MCF 10A (cell line): ENCODE measurements at regions of chr6 and their contacts with region 1.

Region 1: GRCh38 chr6:26031595-26032339 is 55.5 kb upstream of the HFE start:
- DNase-seq: peak; percentile 99
- H3K4me3 Mint-ChIP-seq: peak overlapping the region; percentile 81
- H3K27ac Mint-ChIP-seq: peak overlapping the region; percentile 97
- H3K4me1 Mint-ChIP-seq: peaks cover 25% of the 10 kb centered on the region
- H3K27me3 Mint-ChIP-seq: no peaks in the 10 kb centered on the region
- CTCF ChIP-seq: peak; percentile 12

Region 2: GRCh38 chr6:25835442-25836283 is 196.1 kb before region 1 on chr6:
- CTCF ChIA-PET with region 1: no interaction called
- POLR2A ChIA-PET with region 1: no interaction called
- intact Hi-C with region 1: no loop called
- DNase-seq: no peak
- H3K4me3 Mint-ChIP-seq: no peak overlapping the region
- H3K27ac Mint-ChIP-seq: no peak overlapping the region
- H3K4me1 Mint-ChIP-seq: no peaks in the 10 kb centered on the region
- H3K27me3 Mint-ChIP-seq: peaks cover 34% of the 10 kb centered on the region
- CTCF ChIP-seq: no peak

Region 3: DNA sequence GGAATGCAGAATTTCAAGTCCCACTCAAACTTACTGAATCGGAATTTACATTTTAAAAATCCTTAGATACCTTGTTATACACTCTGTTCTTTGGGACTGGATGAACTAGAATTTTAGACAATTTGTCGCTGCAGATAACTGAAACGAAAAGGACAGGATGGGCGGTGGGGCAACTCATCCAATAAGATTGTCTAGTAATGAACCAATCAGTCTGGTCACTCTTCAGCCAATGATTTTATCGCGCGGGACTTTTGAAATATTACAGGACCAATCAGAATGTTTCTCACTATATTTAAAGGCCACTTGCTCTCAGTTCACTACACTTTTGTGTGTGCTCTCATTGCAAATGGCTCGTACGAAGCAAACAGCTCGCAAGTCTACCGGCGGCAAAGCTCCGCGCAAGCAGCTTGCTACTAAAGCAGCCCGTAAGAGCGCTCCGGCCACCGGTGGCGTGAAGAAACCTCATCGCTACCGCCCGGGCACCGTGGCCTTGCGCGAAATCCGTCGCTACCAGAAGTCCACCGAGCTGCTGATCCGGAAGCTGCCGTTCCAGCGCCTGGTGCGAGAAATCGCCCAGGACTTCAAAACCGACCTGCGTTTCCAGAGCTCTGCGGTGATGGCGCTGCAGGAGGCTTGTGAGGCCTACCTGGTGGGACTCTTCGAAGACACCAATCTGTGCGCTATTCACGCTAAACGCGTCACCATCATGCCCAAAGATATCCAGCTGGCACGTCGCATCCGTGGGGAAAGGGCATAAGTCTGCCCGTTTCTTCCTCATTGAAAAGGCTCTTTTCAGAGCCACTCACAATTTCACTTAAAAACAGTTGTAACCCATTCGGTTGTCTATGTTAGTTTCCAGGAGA is 13.5 kb after region 1 on chr6:
- CTCF ChIA-PET with region 1: interaction called, 70 read pairs
- POLR2A ChIA-PET with region 1: interaction called, 1,354 read pairs
- intact Hi-C with region 1: loop called (anchors 1 kb)
- DNase-seq: peak; percentile 95
- H3K4me3 Mint-ChIP-seq: peak overlapping the region; percentile 80
- H3K27ac Mint-ChIP-seq: peak overlapping the region; percentile 86
- H3K4me1 Mint-ChIP-seq: peaks cover 16% of the 10 kb centered on the region
- H3K27me3 Mint-ChIP-seq: no peaks in the 10 kb centered on the region
- CTCF ChIP-seq: no peak

Region 4: GRCh38 chr6:26087284-26088115 is 55.7 kb after region 1 on chr6 and contains the start of gene HFE:
- CTCF ChIA-PET with region 1: interaction called, 5 read pairs
- POLR2A ChIA-PET with region 1: interaction called, 20 read pairs
- intact Hi-C with region 1: no loop called
- DNase-seq: peak; percentile 53
- H3K4me3 Mint-ChIP-seq: peak within 1 kb of the TSS; percentile 88
- H3K27ac Mint-ChIP-seq: peak within 1 kb of the TSS; percentile 92
- H3K4me1 Mint-ChIP-seq: peaks cover 10% of the 10 kb centered on the region
- H3K27me3 Mint-ChIP-seq: no peaks in the 10 kb centered on the region
- CTCF ChIP-seq: no peak
- total RNA-seq, gene HFE: 2.8 and 5.2 TPM in 2 replicates

Region 5: GRCh38 chr6:26183581-26184366 is 152.0 kb after region 1 on chr6:
- CTCF ChIA-PET with region 1: no interaction called
- POLR2A ChIA-PET with region 1: interaction called, 24 read pairs
- intact Hi-C with region 1: no loop called
- DNase-seq: peak; percentile 56
- H3K4me3 Mint-ChIP-seq: peak overlapping the region; percentile 79
- H3K27ac Mint-ChIP-seq: peak overlapping the region; percentile 84
- H3K4me1 Mint-ChIP-seq: peaks cover 27% of the 10 kb centered on the region
- H3K27me3 Mint-ChIP-seq: no peaks in the 10 kb centered on the region
- CTCF ChIP-seq: no peak

Region 6: DNA sequence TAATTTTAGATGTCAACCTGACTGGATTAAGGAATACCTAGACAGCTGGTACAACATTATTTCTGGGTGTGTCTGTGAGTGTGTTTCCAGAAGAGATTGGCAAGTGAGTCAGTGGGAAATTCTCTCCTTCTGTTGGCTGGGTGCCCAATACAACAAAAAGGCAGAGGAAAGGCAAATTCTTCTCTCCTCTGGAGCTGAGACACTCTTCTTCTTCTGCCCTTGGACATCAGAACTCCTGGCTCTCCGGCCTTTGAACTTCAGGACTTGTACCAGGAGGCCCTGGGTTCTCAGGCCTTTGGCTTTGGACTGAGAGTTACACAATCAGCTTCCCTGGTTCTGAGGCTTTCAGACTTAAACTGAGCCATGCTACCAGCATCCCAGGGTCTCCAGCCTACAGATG is 362.5 kb after region 1 on chr6:
- CTCF ChIA-PET with region 1: no interaction called
- POLR2A ChIA-PET with region 1: no interaction called
- intact Hi-C with region 1: no loop called
- DNase-seq: peak; percentile 94
- H3K4me3 Mint-ChIP-seq: no peak overlapping the region
- H3K27ac Mint-ChIP-seq: no peak overlapping the region
- H3K4me1 Mint-ChIP-seq: peaks cover 8% of the 10 kb centered on the region
- H3K27me3 Mint-ChIP-seq: no peaks in the 10 kb centered on the region
- CTCF ChIP-seq: no peak

Region 7: GRCh38 chr6:27825025-27825793 is 1793.4 kb after region 1 on chr6:
- CTCF ChIA-PET with region 1: no interaction called
- POLR2A ChIA-PET with region 1: interaction called, 12 read pairs
- intact Hi-C with region 1: no loop called
- DNase-seq: no peak
- H3K4me3 Mint-ChIP-seq: peak overlapping the region; percentile 94
- H3K27ac Mint-ChIP-seq: peak overlapping the region; percentile 95
- H3K4me1 Mint-ChIP-seq: peaks cover 10% of the 10 kb centered on the region
- H3K27me3 Mint-ChIP-seq: no peaks in the 10 kb centered on the region
- CTCF ChIP-seq: no peak